ENCODE measurements at regions of chr1 and their contacts with region 1.

Region 1: GRCh38 chr1:26677306-26678115 is 18.3 kb upstream of the ARID1A start:
- DNase-seq: peak; percentile 66 to 90 (median 80)
- ATAC-seq: peak; percentile 97 to 99
- H3K4me3 ChIP-seq: peak overlapping the region; percentile 1
- H3K27ac ChIP-seq: no peak overlapping the region
- H3K4me1 ChIP-seq: no peaks in the 10 kb centered on the region
- H3K27me3 ChIP-seq: no peaks in the 10 kb centered on the region

Region 2: GRCh38 chr1:26602378-26602959 is 75.0 kb before region 1 on chr1:
- intact Hi-C with region 1: loop called in 1 of 4 experiments (anchors 10 kb)
- DNase-seq: no peak
- ATAC-seq: peak in 1 of 2 donors; percentile 23
- H3K4me3 ChIP-seq: no peak overlapping the region
- H3K27ac ChIP-seq: no peak overlapping the region
- H3K4me1 ChIP-seq: no peaks in the 10 kb centered on the region
- H3K27me3 ChIP-seq: no peaks in the 10 kb centered on the region

Region 3: GRCh38 chr1:26723013-26723991 is 45.8 kb after region 1 on chr1:
- intact Hi-C with region 1: no loop called
- DNase-seq: peak; percentile 89 to 93 (median 90)
- ATAC-seq: peak; percentile 96 to 98
- H3K4me3 ChIP-seq: peak overlapping the region; percentile 4
- H3K27ac ChIP-seq: peak overlapping the region; percentile 90
- H3K4me1 ChIP-seq: peaks cover 21% of the 10 kb centered on the region
- H3K27me3 ChIP-seq: no peaks in the 10 kb centered on the region

Region 4: GRCh38 chr1:26733392-26733791 is 55.9 kb after region 1 on chr1:
- intact Hi-C with region 1: no loop called
- DNase-seq: no peak
- ATAC-seq: no peak
- H3K4me3 ChIP-seq: no peak overlapping the region
- H3K27ac ChIP-seq: no peak overlapping the region
- H3K4me1 ChIP-seq: peaks cover 4% of the 10 kb centered on the region
- H3K27me3 ChIP-seq: no peaks in the 10 kb centered on the region

Measured in right cardiac atrium (tissue), 5 donors.